Activated CD4-positive, alpha-beta memory T cell treated with anti-CD3 and anti-CD28 coated beads, Interleukin-2, amount 10 ng/mL, durations not matched to agents 7 days and 5 days (primary cell): ENCODE measurements at regions of chr12 and their contacts with region 1.

Region 1: GRCh38 chr12:1634590-1635191 is 5.7 kb downstream of the WNT5B start:
- DNase-seq: peak; percentile 68
- H3K4me3 Mint-ChIP-seq: no peak overlapping the region
- H3K27ac Mint-ChIP-seq: no peak overlapping the region
- H3K4me1 Mint-ChIP-seq: peaks cover 9% of the 10 kb centered on the region
- H3K27me3 Mint-ChIP-seq: peaks cover 61% of the 10 kb centered on the region

Region 2: DNA sequence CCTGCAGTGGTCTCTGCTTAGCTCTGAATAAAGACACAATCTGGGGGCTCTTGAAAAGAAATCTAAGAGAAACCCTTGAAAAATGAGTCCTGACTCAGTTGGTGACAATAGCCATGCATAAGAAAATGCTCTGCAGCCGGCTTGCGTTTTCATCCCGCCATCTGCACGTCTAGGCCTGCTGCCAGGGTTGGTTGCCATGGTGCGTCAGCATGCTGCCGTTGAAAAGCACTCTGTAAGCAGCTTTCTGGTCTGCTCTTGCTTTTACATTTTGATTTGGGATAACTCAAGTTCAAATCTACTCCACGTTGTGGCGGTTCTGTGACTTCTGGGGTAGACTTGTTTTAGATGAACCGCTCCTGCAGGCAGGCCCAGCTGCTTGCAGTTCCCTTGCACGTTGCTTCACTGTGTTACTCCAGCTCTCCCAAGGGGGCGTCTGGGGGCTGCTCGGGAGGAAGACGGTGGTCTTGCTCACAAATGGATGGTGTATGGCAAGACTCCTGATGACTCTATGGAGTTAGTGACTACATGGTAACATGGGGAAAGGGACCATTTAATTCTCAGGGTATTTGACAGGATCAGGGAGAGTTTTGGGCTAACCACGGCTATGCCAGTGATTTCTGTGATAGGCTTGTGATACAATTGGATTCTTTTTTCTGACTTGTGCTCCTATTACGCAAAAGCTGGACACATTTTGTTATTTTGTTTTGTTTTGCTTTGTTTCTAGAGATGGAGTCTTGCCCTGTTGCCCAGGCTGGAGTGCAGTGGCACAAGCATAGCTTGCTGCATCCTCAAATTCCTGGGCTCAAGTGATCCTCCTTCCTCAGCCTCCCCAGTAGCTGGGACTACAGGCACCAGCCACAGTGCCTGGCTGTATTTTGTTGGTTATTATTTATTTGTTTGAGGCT is 10.1 kb after region 1 on chr12:
- CTCF ChIA-PET with region 1: interaction called, 14 read pairs
- POLR2A ChIA-PET with region 1: no interaction called
- DNase-seq: no peak
- H3K4me3 Mint-ChIP-seq: no peak overlapping the region
- H3K27ac Mint-ChIP-seq: no peak overlapping the region
- H3K4me1 Mint-ChIP-seq: peaks cover 32% of the 10 kb centered on the region
- H3K27me3 Mint-ChIP-seq: peaks cover 19% of the 10 kb centered on the region

Region 3: GRCh38 chr12:1650260-1650977 is 15.7 kb after region 1 on chr12:
- CTCF ChIA-PET with region 1: interaction called, 25 read pairs
- POLR2A ChIA-PET with region 1: no interaction called
- DNase-seq: no peak
- H3K4me3 Mint-ChIP-seq: no peak overlapping the region
- H3K27ac Mint-ChIP-seq: no peak overlapping the region
- H3K4me1 Mint-ChIP-seq: peaks cover 8% of the 10 kb centered on the region
- H3K27me3 Mint-ChIP-seq: peaks cover 43% of the 10 kb centered on the region

Region 4: DNA sequence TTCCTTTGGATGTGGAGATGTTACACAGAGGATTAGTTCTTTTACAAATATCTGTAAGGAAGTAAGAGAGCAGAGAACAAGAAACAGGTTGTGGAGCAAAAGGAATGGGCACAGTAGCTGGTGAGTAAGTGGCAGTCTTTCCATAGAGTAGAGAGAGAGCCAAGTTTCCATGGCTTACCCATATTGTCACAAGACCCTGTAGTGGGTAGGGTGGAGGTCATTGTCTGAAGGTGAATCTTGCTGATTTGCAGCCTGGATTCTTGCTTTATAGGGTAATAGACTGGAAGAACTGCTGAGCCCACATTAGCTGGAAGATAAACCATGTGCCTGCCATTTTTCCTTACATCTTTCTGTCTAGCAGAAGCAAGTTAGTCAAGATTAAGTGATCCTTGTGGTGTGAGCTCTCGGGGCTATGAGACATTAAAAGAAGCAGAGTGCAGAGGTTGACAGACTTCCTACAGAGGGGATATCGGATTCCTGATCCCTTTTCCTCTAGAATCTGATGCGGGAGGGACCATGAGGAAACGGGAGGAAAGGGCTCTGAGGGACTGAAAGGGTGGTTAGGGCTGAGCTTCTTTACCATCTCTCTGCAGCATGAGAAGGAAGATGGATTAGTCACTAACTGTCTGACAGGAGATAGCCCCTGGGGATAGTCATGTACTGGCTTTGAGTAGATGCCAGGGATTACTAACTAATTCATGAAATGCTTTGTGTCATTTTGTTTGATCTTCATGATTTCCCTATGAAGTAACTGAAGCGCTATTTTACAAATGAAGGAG is 141.7 kb after region 1 on chr12:
- CTCF ChIA-PET with region 1: interaction called, 10 read pairs
- POLR2A ChIA-PET with region 1: no interaction called
- DNase-seq: no peak
- H3K4me3 Mint-ChIP-seq: no peak overlapping the region
- H3K27ac Mint-ChIP-seq: no peak overlapping the region
- H3K4me1 Mint-ChIP-seq: peaks cover 1% of the 10 kb centered on the region
- H3K27me3 Mint-ChIP-seq: no peaks in the 10 kb centered on the region

Region 5: GRCh38 chr12:1795785-1796514 is 161.3 kb after region 1 on chr12:
- CTCF ChIA-PET with region 1: interaction called, 85 read pairs
- POLR2A ChIA-PET with region 1: interaction called, 7 read pairs
- DNase-seq: peak; percentile 95
- H3K4me3 Mint-ChIP-seq: peak overlapping the region; percentile 82
- H3K27ac Mint-ChIP-seq: peak overlapping the region; percentile 79
- H3K4me1 Mint-ChIP-seq: peaks cover 18% of the 10 kb centered on the region
- H3K27me3 Mint-ChIP-seq: no peaks in the 10 kb centered on the region